Ascending aorta (tissue), 2 donors: ENCODE measurements at regions of chr12 and their contacts with region 1.

Region 1: DNA sequence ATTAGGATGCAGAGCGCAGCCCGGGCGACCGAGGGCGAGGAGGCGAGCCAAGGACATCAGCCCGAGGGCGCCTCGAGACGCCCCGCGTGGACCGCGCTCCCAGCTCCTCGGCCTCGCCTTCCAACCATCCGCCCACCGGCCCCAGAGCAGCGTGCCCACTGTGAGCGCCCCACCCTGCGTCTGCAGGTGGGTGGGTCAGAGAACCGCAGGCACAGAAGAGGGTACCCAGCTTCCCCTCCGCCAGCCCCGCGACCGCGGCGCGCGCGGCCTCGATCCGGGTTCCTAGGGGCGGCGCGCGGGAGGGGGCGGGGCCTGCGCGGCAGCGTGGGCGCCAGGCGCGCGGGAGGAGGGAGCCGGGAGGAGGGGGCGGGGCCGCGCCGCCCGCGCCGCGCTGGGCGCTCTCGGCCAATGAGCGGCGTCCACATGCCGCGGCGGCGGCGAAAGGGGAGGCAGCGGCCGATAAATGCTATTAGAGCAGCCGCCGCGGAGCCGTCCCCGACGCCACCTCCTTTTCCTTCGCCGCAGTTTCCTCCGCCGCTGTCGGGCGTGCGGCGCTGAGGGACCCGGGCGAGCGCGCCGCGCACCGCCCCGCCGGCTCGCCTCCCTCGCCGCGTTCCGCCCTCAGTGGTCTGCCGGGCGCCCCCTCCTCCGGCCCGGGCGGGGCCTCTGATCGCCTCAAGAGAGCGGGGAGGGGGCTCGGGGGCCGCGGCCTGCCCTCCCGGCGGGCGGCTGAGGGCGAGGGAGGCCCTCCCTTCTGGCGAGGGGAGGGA is at the start of gene ATP2A2:
- DNase-seq: peak; percentile 57 to 93
- H3K4me3 ChIP-seq: peak within 1 kb of the TSS; percentile 93 to 99
- H3K27ac ChIP-seq: peak within 1 kb of the TSS; percentile 99 to 100
- H3K4me1 ChIP-seq: peaks cover 0 to 3% of the 10 kb centered on the region in 2 donors
- H3K27me3 ChIP-seq: no peaks in the 10 kb centered on the region
- CTCF ChIP-seq: no peak
- total RNA-seq, gene ATP2A2: 185 TPM

Region 2: DNA sequence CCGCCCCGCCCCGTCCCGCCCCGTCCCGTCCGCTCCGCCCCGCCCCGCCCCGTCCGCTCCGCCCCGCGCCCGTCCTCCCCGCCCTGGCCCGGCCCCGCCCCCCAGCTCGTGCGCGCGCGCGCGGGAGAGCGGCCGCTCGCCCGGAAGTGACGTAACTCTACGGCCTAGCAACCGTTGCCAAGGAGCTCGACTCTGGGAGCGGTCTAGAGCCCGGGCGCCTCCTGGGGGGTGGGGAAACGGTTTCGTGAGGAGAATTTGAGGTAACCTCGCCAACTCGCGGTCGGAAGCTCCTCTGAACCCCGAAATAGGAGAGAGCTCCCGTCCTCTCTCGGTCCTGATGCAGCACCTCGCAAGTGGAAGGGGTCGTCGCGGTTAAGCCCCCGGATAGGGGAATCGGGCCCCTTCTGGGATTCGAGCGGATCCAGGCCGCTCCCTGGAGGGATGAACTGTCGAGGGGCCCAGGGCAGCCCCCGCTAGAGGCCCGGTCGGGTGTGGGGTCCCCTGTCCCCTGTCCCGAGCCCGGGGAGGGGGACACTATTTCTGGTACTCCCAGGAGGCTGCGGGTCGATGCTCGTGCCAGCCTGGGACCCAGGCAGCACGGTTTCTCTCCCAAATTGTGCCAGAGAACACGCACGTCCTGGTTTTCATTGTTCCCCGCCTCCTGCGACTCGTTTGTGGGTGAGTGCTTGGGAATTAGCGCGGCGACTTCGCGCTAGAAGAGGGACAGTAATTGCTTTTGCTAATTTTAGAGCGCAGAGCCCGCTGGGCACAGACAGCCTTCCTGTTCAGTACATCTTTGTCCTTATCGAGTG is 156.6 kb before region 1 on chr12 and contains the start of gene IFT81:
- intact Hi-C with region 1: loop called (anchors 5 kb)
- DNase-seq: peak; percentile 71 to 97
- H3K4me3 ChIP-seq: peak within 1 kb of the TSS; percentile 92 to 93
- H3K27ac ChIP-seq: peak within 1 kb of the TSS; percentile 93
- H3K4me1 ChIP-seq: peaks cover 0 to 7% of the 10 kb centered on the region in 2 donors
- H3K27me3 ChIP-seq: no peaks in the 10 kb centered on the region
- CTCF ChIP-seq: peak in 1 of 3 experiments; percentile 16
- total RNA-seq, gene IFT81: 12.0 TPM

Region 3: DNA sequence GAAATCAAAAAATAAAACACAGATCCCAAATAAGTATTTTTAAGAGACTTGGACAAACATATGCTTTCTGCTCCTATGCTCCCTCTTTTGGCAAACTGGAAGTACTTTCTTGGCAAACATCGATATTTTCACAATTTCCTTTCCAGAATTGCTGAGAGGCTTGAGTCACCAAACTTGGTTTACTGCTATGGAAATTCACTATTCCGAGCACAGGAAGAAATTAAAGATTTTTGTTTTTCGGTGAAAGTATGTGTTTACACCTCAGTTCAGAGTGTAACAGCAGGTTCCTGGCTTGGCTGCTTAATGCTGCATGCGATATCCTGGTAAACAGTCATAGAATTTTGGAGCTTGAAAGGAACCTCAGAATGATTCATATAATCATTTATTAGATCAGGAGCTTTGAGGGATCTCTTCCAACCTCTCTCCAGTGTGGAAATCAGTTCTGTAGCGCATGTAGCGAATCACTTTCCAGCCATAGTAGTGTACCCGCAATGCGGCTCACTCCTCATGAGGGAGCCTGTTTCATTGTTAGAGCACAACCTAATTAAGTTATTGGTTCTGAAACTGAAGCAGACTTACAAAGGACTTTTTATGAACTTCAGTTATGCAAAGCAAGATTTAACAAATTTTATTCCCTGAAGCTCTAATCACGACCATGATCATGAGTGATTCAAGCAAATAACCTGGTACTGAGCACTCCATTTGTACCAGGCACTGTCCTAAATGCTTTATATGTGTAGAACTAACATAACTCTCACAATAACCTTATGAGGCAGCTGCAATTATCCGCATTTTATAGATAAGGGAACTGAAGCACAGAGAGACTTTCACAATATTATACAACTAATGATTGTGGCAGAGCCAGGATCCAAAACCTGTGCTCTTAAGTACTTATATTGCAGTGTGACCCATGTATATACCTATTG is 56.3 kb before region 1 on chr12:
- intact Hi-C with region 1: loop called (anchors 1 kb)
- DNase-seq: peak in 1 of 2 donors; percentile 69
- H3K4me3 ChIP-seq: peak overlapping the region; percentile 23 to 53
- H3K27ac ChIP-seq: peak overlapping the region; percentile 70 to 73
- H3K4me1 ChIP-seq: peaks cover 5 to 37% of the 10 kb centered on the region in 2 donors
- H3K27me3 ChIP-seq: no peaks in the 10 kb centered on the region
- CTCF ChIP-seq: peak; percentile 54 to 70 (median 61)

Region 4: DNA sequence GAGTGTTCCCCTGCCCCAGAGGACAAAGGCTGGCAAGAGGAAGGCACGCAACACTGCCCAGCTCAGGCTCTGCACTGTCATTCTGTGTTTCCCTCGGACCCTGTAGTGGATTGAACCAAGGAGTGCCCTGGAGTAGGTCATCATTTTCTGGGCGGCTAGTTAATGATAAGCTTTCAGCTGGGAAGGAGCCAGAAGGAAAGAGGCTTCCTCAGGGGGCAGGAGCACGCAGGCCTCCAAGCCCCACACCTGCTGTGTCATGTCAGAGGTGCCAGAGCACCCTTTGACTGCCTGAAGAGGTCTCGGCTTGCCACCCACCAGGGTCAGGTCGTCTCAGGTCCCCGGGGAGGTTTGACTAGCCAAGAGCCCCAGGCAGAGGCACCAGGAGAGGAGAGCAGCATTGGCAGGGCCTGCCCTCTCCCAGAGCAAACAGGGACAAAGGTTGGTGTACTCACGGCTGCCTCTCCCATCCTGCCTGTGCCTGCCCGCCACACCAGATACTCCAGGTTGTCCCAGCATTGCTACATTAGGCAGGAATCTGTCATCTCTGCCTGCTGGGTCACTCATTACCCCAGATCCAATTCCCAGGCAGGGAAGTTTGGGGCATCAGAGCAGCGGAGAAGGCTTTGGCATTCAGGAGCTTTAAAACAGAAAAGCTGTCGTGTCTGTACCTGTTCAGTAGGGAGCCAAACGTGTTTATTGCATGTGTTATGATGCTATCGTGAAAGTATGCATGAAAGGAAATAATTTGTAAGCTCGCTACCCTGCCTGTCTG is 33.4 kb before region 1 on chr12:
- intact Hi-C with region 1: loop called (anchors 2 kb)
- DNase-seq: no peak
- H3K4me3 ChIP-seq: no peak overlapping the region
- H3K27ac ChIP-seq: peak overlapping the region; percentile 69 to 77
- H3K4me1 ChIP-seq: peaks cover 25 to 26% of the 10 kb centered on the region in 2 donors
- H3K27me3 ChIP-seq: no peaks in the 10 kb centered on the region
- CTCF ChIP-seq: no peak

Region 5: DNA sequence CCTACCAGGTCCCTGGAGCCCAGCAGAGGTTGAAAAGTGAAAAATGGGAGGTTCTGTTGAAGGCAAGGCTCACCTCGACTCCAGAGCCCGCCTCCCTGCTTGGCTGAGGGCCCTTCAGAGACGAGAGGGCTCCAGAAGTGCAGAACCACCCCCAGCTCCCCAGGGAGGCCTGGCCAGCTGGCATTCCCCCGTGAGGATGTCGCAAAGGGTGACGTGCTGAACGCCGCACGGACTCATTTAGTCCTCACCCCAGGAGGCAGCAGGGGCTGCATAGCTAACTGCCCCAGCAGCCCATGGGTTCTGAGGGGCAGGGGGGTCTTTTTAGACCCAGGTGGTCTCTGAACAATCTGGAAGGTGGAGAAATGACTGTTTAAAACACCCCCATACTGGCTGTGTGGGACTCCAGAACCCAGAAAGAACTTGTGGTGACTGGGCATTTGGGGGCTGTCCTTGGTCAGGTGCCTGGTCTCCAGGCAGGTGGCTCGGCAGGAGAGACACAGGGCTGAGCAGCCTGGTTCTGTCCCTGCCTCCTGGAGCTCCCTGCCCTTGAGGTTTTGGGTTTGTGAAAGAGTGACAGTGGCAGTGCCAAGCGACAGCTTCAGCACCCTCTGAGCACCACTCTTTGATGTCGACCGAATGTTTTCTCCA is 90.6 kb after region 1 on chr12:
- intact Hi-C with region 1: loop called (anchors 5 kb)
- DNase-seq: peak in 1 of 2 donors; percentile 78
- H3K4me3 ChIP-seq: no peak overlapping the region
- H3K27ac ChIP-seq: peak overlapping the region; percentile 64 to 78
- H3K4me1 ChIP-seq: peaks cover 10 to 59% of the 10 kb centered on the region in 2 donors
- H3K27me3 ChIP-seq: no peaks in the 10 kb centered on the region
- CTCF ChIP-seq: no peak